ENCODE measurements at regions of chr14 and their contacts with region 1.

Region 1: DNA sequence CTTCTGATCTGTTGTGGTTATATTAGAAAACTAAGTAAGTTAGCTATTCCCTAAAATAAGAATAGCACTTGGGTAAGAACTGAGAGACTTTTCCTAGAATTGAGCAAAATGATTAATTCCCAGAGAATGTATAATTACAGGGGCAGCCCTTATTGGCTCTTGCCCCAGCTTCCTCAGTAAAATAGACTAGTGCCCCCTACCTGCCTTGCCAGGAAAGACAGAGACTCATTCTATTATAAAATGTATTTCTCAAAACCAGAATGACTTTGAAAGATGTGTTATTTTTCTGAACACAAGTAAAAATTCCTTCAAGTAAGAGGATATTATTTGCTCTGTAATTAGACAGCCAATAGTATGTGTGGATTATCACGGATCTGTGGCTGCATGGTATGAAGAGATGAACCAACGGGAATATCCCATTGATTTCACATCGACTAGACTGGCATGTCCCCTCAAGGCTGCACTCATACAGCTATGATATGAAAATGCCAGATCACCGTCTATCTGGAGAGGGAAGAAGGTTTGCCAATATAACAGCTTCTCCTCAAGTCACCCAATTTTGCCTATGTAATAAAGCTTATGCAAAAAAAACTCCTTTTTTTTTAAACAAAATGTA is 7.4 kb upstream of the GLRX5 start:
- DNase-seq: peak; percentile 68
- H3K4me3 Mint-ChIP-seq: peak overlapping the region; percentile 10
- H3K27ac Mint-ChIP-seq: peak overlapping the region; percentile 75
- H3K4me1 Mint-ChIP-seq: peaks cover 79% of the 10 kb centered on the region
- H3K27me3 Mint-ChIP-seq: no peaks in the 10 kb centered on the region

Region 2: DNA sequence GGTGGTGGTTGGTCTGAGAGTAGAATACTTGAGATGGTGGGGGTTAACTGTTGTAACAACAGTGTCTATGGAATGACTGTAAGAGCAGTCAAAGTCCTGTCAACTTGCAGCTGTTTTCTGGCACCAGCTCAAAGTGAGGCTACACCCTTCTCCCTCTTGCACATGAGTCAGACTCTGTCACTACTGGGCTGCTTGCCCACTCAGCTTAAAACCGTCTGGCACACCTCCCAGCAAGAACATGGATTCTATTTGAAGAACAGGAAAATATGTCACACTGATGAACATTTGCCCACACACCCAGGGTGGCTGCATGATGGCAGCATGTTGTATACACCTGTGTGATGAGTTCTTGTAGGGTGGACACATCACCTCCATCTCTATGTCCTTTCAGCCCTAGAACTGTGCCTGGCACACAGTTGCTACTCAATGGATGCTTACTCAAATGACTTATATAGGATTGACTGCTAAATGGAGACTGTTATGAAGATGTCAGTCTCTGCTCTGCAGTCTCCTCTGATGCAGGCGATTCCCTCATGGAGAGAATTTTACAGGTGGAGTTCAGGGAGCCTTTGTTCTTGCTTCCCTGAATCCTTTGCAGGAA is 1185.1 kb before region 1 on chr14:
- CTCF ChIA-PET with region 1: no interaction called
- POLR2A ChIA-PET with region 1: no interaction called
- intact Hi-C with region 1: loop called (anchors 10 kb)
- DNase-seq: peak; percentile 80
- H3K4me3 Mint-ChIP-seq: no peak overlapping the region
- H3K27ac Mint-ChIP-seq: peak overlapping the region; percentile 80
- H3K4me1 Mint-ChIP-seq: peaks cover 78% of the 10 kb centered on the region
- H3K27me3 Mint-ChIP-seq: no peaks in the 10 kb centered on the region

Region 3: GRCh38 chr14:95431199-95432143 is 96.0 kb before region 1 on chr14:
- CTCF ChIA-PET with region 1: interaction called, 21 read pairs
- POLR2A ChIA-PET with region 1: interaction called, 3 read pairs
- intact Hi-C with region 1: loop called (anchors 1 kb)
- DNase-seq: peak; percentile 12
- H3K4me3 Mint-ChIP-seq: no peak overlapping the region
- H3K27ac Mint-ChIP-seq: no peak overlapping the region
- H3K4me1 Mint-ChIP-seq: no peaks in the 10 kb centered on the region
- H3K27me3 Mint-ChIP-seq: no peaks in the 10 kb centered on the region

Region 4: GRCh38 chr14:95452176-95452892 is 75.2 kb before region 1 on chr14:
- CTCF ChIA-PET with region 1: interaction called, 202 read pairs
- POLR2A ChIA-PET with region 1: no interaction called
- intact Hi-C with region 1: no loop called
- DNase-seq: no peak
- H3K4me3 Mint-ChIP-seq: no peak overlapping the region
- H3K27ac Mint-ChIP-seq: no peak overlapping the region
- H3K4me1 Mint-ChIP-seq: no peaks in the 10 kb centered on the region
- H3K27me3 Mint-ChIP-seq: no peaks in the 10 kb centered on the region

Region 5: GRCh38 chr14:95480109-95480886 is 47.2 kb before region 1 on chr14:
- CTCF ChIA-PET with region 1: interaction called, 20 read pairs
- POLR2A ChIA-PET with region 1: interaction called, 16 read pairs
- intact Hi-C with region 1: loop called (anchors 1 kb)
- DNase-seq: peak; percentile 74
- H3K4me3 Mint-ChIP-seq: no peak overlapping the region
- H3K27ac Mint-ChIP-seq: peak overlapping the region; percentile 90
- H3K4me1 Mint-ChIP-seq: peaks cover 44% of the 10 kb centered on the region
- H3K27me3 Mint-ChIP-seq: no peaks in the 10 kb centered on the region

Region 6: GRCh38 chr14:95507701-95508103 is 19.8 kb before region 1 on chr14:
- CTCF ChIA-PET with region 1: interaction called, 47 read pairs
- POLR2A ChIA-PET with region 1: interaction called, 9 read pairs
- intact Hi-C with region 1: no loop called
- DNase-seq: peak; percentile 50
- H3K4me3 Mint-ChIP-seq: no peak overlapping the region
- H3K27ac Mint-ChIP-seq: peak overlapping the region; percentile 8
- H3K4me1 Mint-ChIP-seq: peaks cover 78% of the 10 kb centered on the region
- H3K27me3 Mint-ChIP-seq: no peaks in the 10 kb centered on the region

Measured in activated CD4-positive, alpha-beta memory T cell treated with anti-CD3 and anti-CD28 coated beads for 36 hours (primary cell).